ENCODE measurements at regions of chr3 and their contacts with region 1.

Region 1: DNA sequence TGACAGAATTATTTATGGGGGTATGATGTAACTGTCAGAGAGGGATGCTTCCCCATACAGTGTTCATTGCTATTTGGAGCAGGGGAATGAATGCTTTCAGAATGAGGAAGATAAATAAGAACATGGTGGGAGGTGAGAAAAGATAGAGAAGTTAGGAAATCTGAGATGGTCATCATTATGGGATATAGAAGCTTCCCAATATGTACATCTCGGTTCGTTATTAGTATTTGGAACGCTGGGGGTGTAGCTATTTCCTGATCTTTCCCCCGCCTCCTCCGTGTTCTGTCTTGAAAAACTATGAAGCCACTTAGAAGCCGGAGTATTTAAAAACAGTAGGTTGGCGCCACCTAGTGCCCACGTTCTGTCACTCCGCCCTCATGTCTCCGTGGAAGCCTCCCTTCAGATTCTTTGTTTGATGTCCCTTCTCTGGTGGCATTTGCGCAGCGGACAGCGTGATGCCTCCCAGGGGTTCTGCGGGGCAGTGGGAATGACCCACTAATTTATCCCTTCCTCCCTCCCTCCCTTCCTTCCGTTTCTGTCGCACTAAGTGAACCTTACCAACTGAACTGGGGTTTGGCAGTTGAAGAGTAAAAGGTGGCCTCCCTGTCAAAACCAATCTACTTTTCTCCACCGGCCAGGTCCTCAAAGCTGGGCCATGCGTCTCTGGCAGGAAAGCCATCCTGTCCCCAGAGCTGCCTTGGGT is 184.5 kb downstream of the FEZF2 start:
- DNase-seq: peak; percentile 82
- ATAC-seq: peak; percentile 73
- H3K4me3 Mint-ChIP-seq: no peak overlapping the region
- H3K27ac Mint-ChIP-seq: no peak overlapping the region
- H3K4me1 Mint-ChIP-seq: peaks cover 4% of the 10 kb centered on the region
- H3K27me3 Mint-ChIP-seq: no peaks in the 10 kb centered on the region

Region 2: GRCh38 chr3:61381745-61382392 is 807.0 kb before region 1 on chr3:
- CTCF ChIA-PET with region 1: no interaction called
- POLR2A ChIA-PET with region 1: no interaction called
- intact Hi-C with region 1: loop called in 1 of 2 experiments (anchors 10 kb)
- DNase-seq: no peak
- ATAC-seq: peak; percentile 87
- H3K4me3 Mint-ChIP-seq: no peak overlapping the region
- H3K27ac Mint-ChIP-seq: no peak overlapping the region
- H3K4me1 Mint-ChIP-seq: peaks cover 3% of the 10 kb centered on the region
- H3K27me3 Mint-ChIP-seq: peaks cover 17% of the 10 kb centered on the region

Region 3: GRCh38 chr3:61858056-61858455 is 330.8 kb before region 1 on chr3:
- CTCF ChIA-PET with region 1: interaction called, 4 read pairs
- POLR2A ChIA-PET with region 1: no interaction called
- intact Hi-C with region 1: loop called (anchors 2 to 10 kb)
- DNase-seq: no peak
- ATAC-seq: no peak
- H3K4me3 Mint-ChIP-seq: no peak overlapping the region
- H3K27ac Mint-ChIP-seq: no peak overlapping the region
- H3K4me1 Mint-ChIP-seq: no peaks in the 10 kb centered on the region
- H3K27me3 Mint-ChIP-seq: peaks cover 7% of the 10 kb centered on the region

Region 4: GRCh38 chr3:61936344-61936937 is 252.4 kb before region 1 on chr3:
- CTCF ChIA-PET with region 1: interaction called, 3 read pairs
- POLR2A ChIA-PET with region 1: no interaction called
- intact Hi-C with region 1: loop called in 1 of 2 experiments (anchors 2 kb)
- DNase-seq: peak; percentile 49
- ATAC-seq: no peak
- H3K4me3 Mint-ChIP-seq: no peak overlapping the region
- H3K27ac Mint-ChIP-seq: no peak overlapping the region
- H3K4me1 Mint-ChIP-seq: no peaks in the 10 kb centered on the region
- H3K27me3 Mint-ChIP-seq: peaks cover 6% of the 10 kb centered on the region